HepG2 (cell line): ENCODE measurements at regions of chr14 and their contacts with region 1.

Region 1: GRCh38 chr14:105090493-105091053 is 25.3 kb upstream of the GPR132 start:
- DNase-seq: peak; percentile 79
- ATAC-seq: peak; percentile 77
- H3K4me3 ChIP-seq: no peak overlapping the region; a peak in 1 of 6 replicates
- H3K27ac ChIP-seq: no peak overlapping the region
- H3K4me1 ChIP-seq: peaks cover 57% of the 10 kb centered on the region
- H3K27me3 ChIP-seq: peaks cover 13 to 44% of the 10 kb centered on the region in 2 experiments; a peak in 4 of 5 replicates
- CTCF ChIP-seq: peak; percentile 97
- EP300 ChIP-seq: no peak
- POLR2A ChIP-seq: no peak
- RAD21 ChIP-seq: peak; percentile 65

Region 2: GRCh38 chr14:105144666-105145380 is 54.2 kb after region 1 on chr14:
- CTCF ChIA-PET with region 1: no interaction called
- POLR2A ChIA-PET with region 1: no interaction called
- in situ Hi-C with region 1: loop called (anchors 10 kb)
- intact Hi-C with region 1: no loop called
- DNase-seq: no peak
- ATAC-seq: peak; percentile 41
- H3K4me3 ChIP-seq: no peak overlapping the region
- H3K27ac ChIP-seq: no peak overlapping the region
- H3K4me1 ChIP-seq: no peaks in the 10 kb centered on the region
- H3K27me3 ChIP-seq: peaks cover 11 to 29% of the 10 kb centered on the region in 2 experiments; a peak in 4 of 5 replicates
- CTCF ChIP-seq: peak; percentile 33
- EP300 ChIP-seq: no peak
- POLR2A ChIP-seq: no peak
- RAD21 ChIP-seq: no peak

Region 3: GRCh38 chr14:105187935-105188524 is 97.5 kb after region 1 on chr14:
- CTCF ChIA-PET with region 1: no interaction called
- POLR2A ChIA-PET with region 1: no interaction called
- in situ Hi-C with region 1: no loop called
- intact Hi-C with region 1: loop called (anchors 5 kb)
- DNase-seq: no peak
- ATAC-seq: no peak
- H3K4me3 ChIP-seq: no peak overlapping the region
- H3K27ac ChIP-seq: no peak overlapping the region
- H3K4me1 ChIP-seq: no peaks in the 10 kb centered on the region
- H3K27me3 ChIP-seq: peaks cover 4 to 27% of the 10 kb centered on the region in 2 experiments; a peak in 4 of 5 replicates
- CTCF ChIP-seq: peak; percentile 58
- EP300 ChIP-seq: no peak
- POLR2A ChIP-seq: no peak
- RAD21 ChIP-seq: 0 out of 2 replicates have a peak, but pooled peaks have one; percentile 16